ENCODE measurements at regions of chr6 and their contacts with region 1.

Region 1: GRCh38 chr6:158697811-158698210 is 48.0 kb downstream of the SYTL3 start:
- DNase-seq: no peak
- H3K4me3 ChIP-seq: no peak overlapping the region
- H3K27ac ChIP-seq: no peak overlapping the region
- H3K4me1 ChIP-seq: no peaks in the 10 kb centered on the region
- H3K27me3 ChIP-seq: no peaks in the 10 kb centered on the region
- CTCF ChIP-seq: no peak
- EP300 ChIP-seq: no peak
- POLR2A ChIP-seq: no peak

Region 2: DNA sequence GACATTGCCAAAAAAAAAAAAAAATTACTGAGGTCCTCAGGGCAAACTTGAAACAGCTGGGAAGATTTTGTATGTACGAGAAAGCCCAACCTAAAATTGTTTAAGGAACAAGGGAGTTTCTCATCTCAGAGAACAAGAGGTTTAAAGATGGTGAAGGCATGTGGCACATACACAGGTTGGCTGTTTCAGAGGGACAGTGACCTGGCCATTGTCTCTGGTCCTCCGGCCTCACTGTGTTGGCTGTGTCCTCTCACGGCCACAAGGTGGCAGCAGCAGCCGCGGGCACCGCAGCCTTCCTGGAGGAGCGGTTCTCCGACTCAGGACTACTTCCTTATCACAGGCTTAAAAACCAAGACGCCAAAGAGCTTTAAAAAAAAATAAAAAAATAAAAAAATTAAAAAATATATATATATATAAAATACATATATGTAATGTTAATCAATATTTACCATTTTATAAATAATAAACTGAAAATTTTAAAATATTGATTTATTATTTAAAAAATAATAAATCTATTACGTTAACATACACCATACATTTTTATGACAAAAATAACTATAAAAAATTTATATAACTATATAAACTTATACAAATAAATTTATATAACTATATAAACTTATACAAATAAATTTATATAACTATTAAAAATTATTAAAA is 476.9 kb before region 1 on chr6:
- intact Hi-C with region 1: loop called (anchors 10 kb)
- DNase-seq: peak; percentile 85 to 93
- H3K4me3 ChIP-seq: no peak overlapping the region
- H3K27ac ChIP-seq: no peak overlapping the region
- H3K4me1 ChIP-seq: peaks cover 0 to 8% (median 0%) of the 10 kb centered on the region in 4 donors
- H3K27me3 ChIP-seq: no peaks in the 10 kb centered on the region
- CTCF ChIP-seq: peak in 5 of 7 experiments; percentile 85 to 94 (median 93)
- EP300 ChIP-seq: no peak
- POLR2A ChIP-seq: no peak

Measured in stomach (tissue), 19 donors.